A549 (cell line): ENCODE measurements at regions of chr12 and their contacts with region 1.

Region 1: GRCh38 chr12:1795785-1796514 is 24.4 kb upstream of the LRTM2 start:
- DNase-seq: peak; percentile 85 to 90
- ATAC-seq: peak; percentile 95 to 98
- H3K4me3 ChIP-seq: peak overlapping the region; percentile 54
- H3K27ac ChIP-seq: peak overlapping the region; percentile 78 to 85
- H3K4me1 ChIP-seq: peaks cover 10% of the 10 kb centered on the region
- CTCF ChIP-seq: peak; percentile 98
- EP300 ChIP-seq: no peak
- POLR2A ChIP-seq: peak; percentile 87
- RAD21 ChIP-seq: peak; percentile 90 to 99

Region 2: DNA sequence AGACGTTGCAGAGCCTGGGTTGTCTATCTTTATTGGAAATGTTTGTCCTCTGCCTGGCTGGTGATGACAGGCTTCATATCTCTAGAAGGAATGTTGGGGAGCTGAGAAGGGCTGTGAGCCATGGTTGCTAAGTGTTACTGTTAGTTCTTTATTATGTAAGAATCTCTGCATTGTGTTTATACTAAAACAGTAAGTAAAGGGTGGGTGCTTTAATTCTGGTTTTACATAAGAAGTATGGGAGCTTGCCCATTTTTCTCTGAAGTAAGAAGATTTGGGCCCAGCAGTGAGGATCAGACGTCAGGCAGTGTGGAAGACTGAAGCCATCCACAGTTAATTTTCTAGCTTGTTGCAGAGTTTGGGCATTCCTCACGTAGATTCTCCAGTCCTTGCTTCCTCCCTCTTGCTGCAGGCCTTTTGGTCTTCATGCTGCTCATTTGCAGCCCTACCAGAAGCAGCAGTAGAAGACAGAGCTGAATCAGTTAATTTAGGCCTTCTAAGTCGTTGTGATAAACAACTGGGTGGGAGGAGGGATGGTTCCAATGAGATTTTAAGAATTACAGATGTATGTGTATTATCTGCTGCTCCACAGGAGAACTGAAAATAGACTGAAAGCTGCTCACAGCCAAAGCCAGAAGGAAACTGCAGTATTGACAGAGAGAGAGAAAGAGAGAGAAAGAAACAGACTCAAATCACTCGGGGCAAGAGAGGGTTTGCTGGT is 145.5 kb before region 1 on chr12:
- CTCF ChIA-PET with region 1: interaction called, 483 read pairs
- POLR2A ChIA-PET with region 1: interaction called, 10 read pairs
- DNase-seq: no peak
- ATAC-seq: no peak
- H3K4me3 ChIP-seq: no peak overlapping the region
- H3K27ac ChIP-seq: no peak overlapping the region
- H3K4me1 ChIP-seq: no peaks in the 10 kb centered on the region
- CTCF ChIP-seq: no peak
- EP300 ChIP-seq: no peak
- POLR2A ChIP-seq: no peak
- RAD21 ChIP-seq: no peak

Region 3: GRCh38 chr12:1680804-1681492 is 115.0 kb before region 1 on chr12:
- CTCF ChIA-PET with region 1: interaction called, 17 read pairs
- POLR2A ChIA-PET with region 1: no interaction called
- DNase-seq: no peak
- ATAC-seq: no peak
- H3K4me3 ChIP-seq: no peak overlapping the region
- H3K27ac ChIP-seq: no peak overlapping the region
- H3K4me1 ChIP-seq: no peaks in the 10 kb centered on the region
- CTCF ChIP-seq: no peak
- EP300 ChIP-seq: no peak
- POLR2A ChIP-seq: no peak
- RAD21 ChIP-seq: no peak

Region 4: DNA sequence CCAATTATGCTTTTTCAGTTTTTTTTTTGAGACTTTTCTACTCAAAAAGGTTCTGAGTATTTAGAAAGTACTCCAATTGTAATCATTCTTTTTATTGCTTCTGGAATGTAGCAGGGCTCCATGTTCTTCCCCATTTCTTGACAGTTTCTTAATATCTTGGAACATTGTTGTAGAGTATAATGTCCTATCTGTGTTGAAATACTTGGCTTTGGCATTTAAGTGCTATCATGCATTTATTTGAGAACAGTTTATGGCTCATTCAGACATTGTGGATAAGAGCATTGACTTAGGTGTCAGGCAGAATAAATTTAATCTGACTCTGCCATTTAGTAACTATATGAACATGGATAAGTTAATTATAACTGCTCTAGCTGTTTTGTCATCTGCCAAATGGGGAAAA is 76.8 kb before region 1 on chr12:
- CTCF ChIA-PET with region 1: interaction called, 11 read pairs
- POLR2A ChIA-PET with region 1: no interaction called
- DNase-seq: no peak
- ATAC-seq: no peak
- H3K4me3 ChIP-seq: no peak overlapping the region
- H3K27ac ChIP-seq: no peak overlapping the region
- H3K4me1 ChIP-seq: peaks cover 9% of the 10 kb centered on the region
- CTCF ChIP-seq: no peak
- EP300 ChIP-seq: no peak
- POLR2A ChIP-seq: no peak
- RAD21 ChIP-seq: no peak

Region 5: DNA sequence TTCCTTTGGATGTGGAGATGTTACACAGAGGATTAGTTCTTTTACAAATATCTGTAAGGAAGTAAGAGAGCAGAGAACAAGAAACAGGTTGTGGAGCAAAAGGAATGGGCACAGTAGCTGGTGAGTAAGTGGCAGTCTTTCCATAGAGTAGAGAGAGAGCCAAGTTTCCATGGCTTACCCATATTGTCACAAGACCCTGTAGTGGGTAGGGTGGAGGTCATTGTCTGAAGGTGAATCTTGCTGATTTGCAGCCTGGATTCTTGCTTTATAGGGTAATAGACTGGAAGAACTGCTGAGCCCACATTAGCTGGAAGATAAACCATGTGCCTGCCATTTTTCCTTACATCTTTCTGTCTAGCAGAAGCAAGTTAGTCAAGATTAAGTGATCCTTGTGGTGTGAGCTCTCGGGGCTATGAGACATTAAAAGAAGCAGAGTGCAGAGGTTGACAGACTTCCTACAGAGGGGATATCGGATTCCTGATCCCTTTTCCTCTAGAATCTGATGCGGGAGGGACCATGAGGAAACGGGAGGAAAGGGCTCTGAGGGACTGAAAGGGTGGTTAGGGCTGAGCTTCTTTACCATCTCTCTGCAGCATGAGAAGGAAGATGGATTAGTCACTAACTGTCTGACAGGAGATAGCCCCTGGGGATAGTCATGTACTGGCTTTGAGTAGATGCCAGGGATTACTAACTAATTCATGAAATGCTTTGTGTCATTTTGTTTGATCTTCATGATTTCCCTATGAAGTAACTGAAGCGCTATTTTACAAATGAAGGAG is 19.6 kb before region 1 on chr12:
- CTCF ChIA-PET with region 1: interaction called, 32 read pairs
- POLR2A ChIA-PET with region 1: no interaction called
- DNase-seq: peak; percentile 48 to 65
- ATAC-seq: peak; percentile 87 to 93; a peak in 5 of 6 replicates
- H3K4me3 ChIP-seq: no peak overlapping the region
- H3K27ac ChIP-seq: peak overlapping the region; percentile 37 to 67; a peak in 5 of 6 replicates
- H3K4me1 ChIP-seq: peaks cover 32% of the 10 kb centered on the region
- CTCF ChIP-seq: no peak
- EP300 ChIP-seq: no peak
- POLR2A ChIP-seq: no peak
- RAD21 ChIP-seq: no peak

Region 6: DNA sequence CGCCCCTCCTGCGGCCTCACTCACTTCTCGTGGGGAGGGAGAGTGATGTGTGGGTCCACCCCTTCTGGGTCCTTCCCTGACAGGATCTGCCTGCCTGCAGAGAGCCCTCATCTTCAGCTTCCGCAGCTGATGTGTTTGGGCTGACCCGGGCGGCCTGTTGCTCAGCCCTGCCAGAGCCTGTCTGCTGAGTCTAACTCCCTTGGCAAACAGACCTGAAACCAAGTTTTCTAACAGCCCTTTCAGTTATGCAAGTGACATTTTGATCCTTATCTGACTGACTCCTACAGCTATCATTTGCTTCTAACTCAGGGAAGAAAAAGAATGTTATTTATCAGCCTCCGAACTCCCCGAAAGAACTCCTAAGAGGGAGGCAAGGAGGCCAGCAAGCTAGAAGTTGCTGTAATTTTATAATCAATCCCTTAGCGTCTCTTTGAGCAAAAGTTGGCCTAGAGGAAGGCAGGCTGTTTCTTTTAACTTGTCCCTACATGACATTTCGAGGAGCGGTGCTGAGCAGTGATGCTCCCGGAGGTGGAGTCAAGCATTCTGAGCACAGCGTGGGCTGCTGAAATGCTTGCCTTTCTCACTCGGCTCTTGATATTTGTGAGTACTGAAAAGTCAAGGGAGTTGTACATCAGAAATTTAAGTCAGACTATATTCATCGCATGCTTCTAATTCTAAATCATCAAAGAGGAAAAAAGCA is 154.0 kb after region 1 on chr12:
- CTCF ChIA-PET with region 1: interaction called, 324 read pairs
- POLR2A ChIA-PET with region 1: no interaction called
- DNase-seq: no peak
- ATAC-seq: no peak
- H3K4me3 ChIP-seq: no peak overlapping the region
- H3K27ac ChIP-seq: no peak overlapping the region
- H3K4me1 ChIP-seq: no peaks in the 10 kb centered on the region
- CTCF ChIP-seq: no peak
- EP300 ChIP-seq: no peak
- POLR2A ChIP-seq: no peak
- RAD21 ChIP-seq: no peak

Region 7: DNA sequence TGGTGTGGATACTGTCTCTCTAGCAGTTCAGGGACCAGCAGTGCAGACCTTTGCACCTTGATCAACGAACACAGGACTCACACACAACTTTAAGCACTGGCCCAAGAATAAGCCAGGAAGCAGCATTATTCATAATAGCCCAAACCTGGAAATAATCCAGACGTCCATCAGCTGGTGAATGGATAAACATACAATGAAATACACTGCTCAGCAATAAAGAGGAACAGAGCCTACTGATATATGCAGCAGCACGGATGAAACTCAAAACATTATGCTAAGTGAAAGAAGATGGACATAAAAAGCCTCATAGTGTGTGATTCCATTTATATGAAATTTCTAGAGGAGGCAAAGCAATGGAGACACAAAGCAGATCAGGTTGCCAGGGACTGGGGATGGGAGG is 694.9 kb after region 1 on chr12:
- CTCF ChIA-PET with region 1: no interaction called
- POLR2A ChIA-PET with region 1: no interaction called
- DNase-seq: no peak
- ATAC-seq: no peak
- H3K4me3 ChIP-seq: no peak overlapping the region
- H3K27ac ChIP-seq: no peak overlapping the region
- H3K4me1 ChIP-seq: no peaks in the 10 kb centered on the region
- CTCF ChIP-seq: no peak
- EP300 ChIP-seq: no peak
- POLR2A ChIP-seq: no peak
- RAD21 ChIP-seq: no peak